Prostate gland (tissue), 2 donors: ENCODE measurements at regions of chr17 and their contacts with region 1.

Region 1: GRCh38 chr17:8745586-8746500 is 1.2 kb upstream of the CCDC42 start:
- DNase-seq: peak; percentile 33
- H3K4me3 ChIP-seq: peak overlapping the region; percentile 51 to 52
- H3K27ac ChIP-seq: peak overlapping the region in 1 of 2 donors; percentile 10
- H3K4me1 ChIP-seq: peaks cover 3% of the 10 kb centered on the region
- H3K27me3 ChIP-seq: no peaks in the 10 kb centered on the region
- CTCF ChIP-seq: peak; percentile 76 to 98 (median 87)
- POLR2A ChIP-seq: no peak

Region 2: DNA sequence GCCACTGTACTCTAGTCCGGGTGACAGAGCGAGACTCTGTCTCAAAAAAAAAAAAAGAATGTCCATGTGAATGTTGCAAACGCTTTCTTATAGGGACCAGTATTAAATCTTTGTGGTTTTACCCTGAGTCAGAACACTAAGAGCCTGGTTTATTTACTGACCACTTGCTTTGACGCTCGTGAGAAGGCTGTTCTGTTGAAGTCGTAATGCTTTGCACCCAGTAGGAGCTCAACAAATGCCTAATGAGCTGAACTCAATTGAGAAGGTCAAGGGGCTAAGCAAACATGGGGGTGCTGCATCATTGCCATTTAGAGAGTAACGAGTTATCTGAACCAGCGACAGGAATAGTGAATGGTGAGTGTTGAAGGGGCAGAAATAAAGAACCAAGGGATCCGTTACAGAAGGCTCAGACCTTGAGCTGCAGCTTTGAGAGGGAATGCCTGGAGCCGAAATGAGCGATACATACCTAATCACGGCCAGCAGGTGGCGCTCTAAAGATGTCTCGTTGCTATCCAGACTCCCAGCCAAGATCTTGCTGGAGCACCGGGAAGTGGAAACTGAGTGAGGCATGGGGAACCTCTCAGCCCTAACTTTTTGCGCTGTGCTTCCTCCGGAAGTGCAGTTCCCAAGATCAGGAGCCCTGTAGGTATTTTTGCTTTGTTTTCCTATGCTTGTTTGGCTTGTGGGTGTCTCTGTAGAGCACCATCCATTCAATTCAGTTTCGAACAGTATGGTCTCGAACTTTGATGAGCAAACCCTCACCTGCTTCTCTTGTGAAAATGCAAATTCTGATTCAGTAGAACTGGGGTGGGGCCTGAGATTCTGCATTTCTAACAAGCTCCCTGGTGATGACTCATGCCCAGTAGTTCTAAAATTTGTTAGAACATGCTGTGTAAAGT is 335.6 kb before region 1 on chr17:
- intact Hi-C with region 1: loop called (anchors 2 kb)
- DNase-seq: peak; percentile 83
- H3K4me3 ChIP-seq: no peak overlapping the region
- H3K27ac ChIP-seq: no peak overlapping the region
- H3K4me1 ChIP-seq: no peaks in the 10 kb centered on the region
- H3K27me3 ChIP-seq: no peaks in the 10 kb centered on the region
- CTCF ChIP-seq: peak; percentile 73 to 94 (median 85)
- POLR2A ChIP-seq: no peak

Region 3: GRCh38 chr17:8572764-8573163 is 173.1 kb before region 1 on chr17:
- intact Hi-C with region 1: loop called (anchors 5 kb)
- DNase-seq: no peak
- H3K4me3 ChIP-seq: no peak overlapping the region
- H3K27ac ChIP-seq: no peak overlapping the region
- H3K4me1 ChIP-seq: no peaks in the 10 kb centered on the region
- H3K27me3 ChIP-seq: no peaks in the 10 kb centered on the region
- CTCF ChIP-seq: peak in 2 of 4 experiments; percentile 40 to 44
- POLR2A ChIP-seq: no peak

Region 4: GRCh38 chr17:8785547-8786413 is 39.9 kb after region 1 on chr17:
- intact Hi-C with region 1: no loop called
- DNase-seq: peak; percentile 67
- H3K4me3 ChIP-seq: no peak overlapping the region
- H3K27ac ChIP-seq: no peak overlapping the region
- H3K4me1 ChIP-seq: no peaks in the 10 kb centered on the region
- H3K27me3 ChIP-seq: no peaks in the 10 kb centered on the region
- CTCF ChIP-seq: peak; percentile 34 to 80 (median 74)
- POLR2A ChIP-seq: no peak